Sigmoid colon (tissue), 7 donors: ENCODE measurements at regions of chr2 and their contacts with region 1.

Region 1: GRCh38 chr2:168118733-168119514 is 128.5 kb downstream of the STK39 start:
- DNase-seq: no peak
- H3K4me3 ChIP-seq: no peak overlapping the region
- H3K27ac ChIP-seq: peak overlapping the region; percentile 3 to 27 (median 20)
- H3K4me1 ChIP-seq: peaks cover 0 to 15% (median 11%) of the 10 kb centered on the region in 4 donors
- H3K27me3 ChIP-seq: no peaks in the 10 kb centered on the region
- CTCF ChIP-seq: peak; percentile 23 to 58 (median 52)
- EP300 ChIP-seq: no peak
- POLR2A ChIP-seq: no peak

Region 2: GRCh38 chr2:166539340-166540162 is 1579.4 kb before region 1 on chr2:
- intact Hi-C with region 1: loop called (anchors 2 kb)
- DNase-seq: no peak
- H3K4me3 ChIP-seq: peak overlapping the region in 2 of 4 donors; percentile 11 to 20
- H3K27ac ChIP-seq: no peak overlapping the region
- H3K4me1 ChIP-seq: peaks cover 0 to 10% (median 4%) of the 10 kb centered on the region in 4 donors
- H3K27me3 ChIP-seq: no peaks in the 10 kb centered on the region
- CTCF ChIP-seq: peak; percentile 64 to 76 (median 70)
- EP300 ChIP-seq: no peak
- POLR2A ChIP-seq: no peak

Region 3: DNA sequence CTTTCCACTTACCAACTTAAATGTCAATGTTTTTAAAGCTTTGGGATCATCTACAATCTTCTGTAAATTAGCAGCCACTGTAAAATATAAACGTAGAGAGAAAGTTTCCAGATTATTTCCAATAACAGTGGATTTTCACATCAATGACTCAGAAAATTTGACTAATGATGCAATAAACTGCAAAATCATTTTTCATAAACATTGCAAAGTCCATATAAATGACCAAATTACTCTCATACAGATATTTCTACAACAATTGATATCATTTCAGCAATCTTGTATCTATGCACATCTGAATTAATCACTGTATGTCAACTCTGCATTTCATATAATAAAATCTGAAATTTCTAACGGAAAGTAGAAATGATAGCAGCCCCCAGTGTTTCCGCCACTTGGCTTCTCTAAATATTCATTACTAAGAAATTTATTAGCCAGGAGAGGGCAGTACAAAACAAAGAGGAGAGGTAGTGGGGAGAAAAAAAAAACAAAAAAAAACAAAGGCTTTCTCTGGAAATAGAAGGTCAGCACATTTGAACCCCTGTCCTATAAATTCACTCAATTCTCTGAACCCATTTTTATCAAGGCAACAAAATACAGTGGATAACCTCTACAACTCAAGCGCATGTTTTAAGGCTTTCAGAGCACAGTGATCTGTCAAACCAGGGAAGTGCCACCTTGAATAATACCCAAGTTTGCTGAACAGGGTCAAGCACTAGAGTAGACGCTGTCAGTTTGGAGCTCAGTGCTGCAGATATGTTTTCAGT is 154.1 kb before region 1 on chr2:
- intact Hi-C with region 1: loop called (anchors 10 kb)
- DNase-seq: no peak
- H3K4me3 ChIP-seq: no peak overlapping the region
- H3K27ac ChIP-seq: no peak overlapping the region
- H3K4me1 ChIP-seq: peaks cover 0 to 40% (median 25%) of the 10 kb centered on the region in 4 donors
- H3K27me3 ChIP-seq: no peaks in the 10 kb centered on the region
- CTCF ChIP-seq: no peak
- EP300 ChIP-seq: no peak
- POLR2A ChIP-seq: no peak

Region 4: GRCh38 chr2:168136392-168136977 is 17.6 kb after region 1 on chr2:
- intact Hi-C with region 1: no loop called
- DNase-seq: no peak
- H3K4me3 ChIP-seq: no peak overlapping the region
- H3K27ac ChIP-seq: no peak overlapping the region
- H3K4me1 ChIP-seq: peaks cover 0 to 9% (median 2%) of the 10 kb centered on the region in 4 donors
- H3K27me3 ChIP-seq: no peaks in the 10 kb centered on the region
- CTCF ChIP-seq: peak in 1 of 4 experiments; percentile 37
- EP300 ChIP-seq: no peak
- POLR2A ChIP-seq: no peak